ENCODE measurements at regions of chr17 and their contacts with region 1.

Region 1: DNA sequence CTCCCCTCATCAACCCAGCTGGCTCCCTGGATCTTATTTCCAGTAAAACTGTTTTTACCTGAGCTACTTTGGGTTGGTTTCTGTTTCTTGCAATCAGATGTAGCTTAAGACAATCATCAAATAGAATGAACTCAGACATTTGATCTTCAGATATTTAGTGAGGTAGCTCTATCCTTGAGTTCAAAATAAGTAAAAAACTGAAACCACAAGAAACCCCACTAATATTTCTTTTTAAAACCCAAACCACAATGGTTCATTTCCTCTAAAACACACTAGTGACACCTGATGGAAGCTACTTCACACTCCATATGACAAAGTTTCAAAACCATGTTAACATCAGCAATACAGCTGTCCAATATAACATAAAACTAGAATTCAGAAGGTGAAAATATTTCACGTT is 37.8 kb downstream of the CACNG1 start:
- DNase-seq: no peak
- ATAC-seq: peak; percentile 67
- H3K4me3 Mint-ChIP-seq: peak overlapping the region; percentile 46
- H3K27ac Mint-ChIP-seq: peak overlapping the region; percentile 88
- H3K4me1 Mint-ChIP-seq: peaks cover 24% of the 10 kb centered on the region
- H3K27me3 Mint-ChIP-seq: no peaks in the 10 kb centered on the region

Region 2: GRCh38 chr17:67068999-67069398 is 13.1 kb before region 1 on chr17:
- CTCF ChIA-PET with region 1: interaction called, 13 read pairs
- POLR2A ChIA-PET with region 1: no interaction called
- DNase-seq: no peak
- ATAC-seq: no peak
- H3K4me3 Mint-ChIP-seq: no peak overlapping the region
- H3K27ac Mint-ChIP-seq: no peak overlapping the region
- H3K4me1 Mint-ChIP-seq: no peaks in the 10 kb centered on the region
- H3K27me3 Mint-ChIP-seq: no peaks in the 10 kb centered on the region